SK-N-SH (cell line): ENCODE measurements at regions of chr11 and their contacts with region 1.

Region 1: DNA sequence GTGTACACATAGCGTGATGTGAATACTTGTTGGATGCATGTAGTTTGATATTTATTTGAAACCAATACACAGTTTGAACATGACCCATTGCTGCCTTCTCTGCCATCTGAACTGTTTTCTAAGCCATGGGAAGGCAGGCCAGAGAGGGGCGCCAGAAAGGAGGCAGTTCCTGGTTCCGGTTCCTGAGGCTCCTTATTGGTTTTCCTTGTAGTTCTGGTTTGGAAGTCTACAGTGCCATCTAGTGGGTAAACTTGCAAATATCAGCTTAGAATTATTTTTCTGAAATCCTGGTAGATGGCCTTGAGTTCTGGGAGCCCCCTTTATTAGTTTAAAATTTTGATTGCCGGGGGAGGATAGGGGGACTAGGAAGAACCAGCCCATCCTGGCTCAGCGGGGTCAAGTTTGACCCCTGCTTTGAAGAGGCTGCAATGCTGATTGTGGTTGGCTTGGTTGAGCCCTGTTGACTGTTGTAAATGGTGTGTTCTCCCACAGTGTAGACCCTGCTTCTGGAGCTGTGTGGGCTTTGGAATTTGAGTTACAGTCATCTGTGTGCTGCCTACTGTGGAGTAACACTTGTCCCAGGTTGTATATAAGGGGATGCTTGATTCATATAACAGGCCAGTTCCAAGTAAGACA is 48.4 kb downstream of the GRAMD1B start:
- DNase-seq: peak; percentile 76
- H3K4me3 ChIP-seq: no peak overlapping the region
- H3K27ac ChIP-seq: peak overlapping the region in 1 of 2 experiments; percentile 21; a peak in 1 of 4 replicates
- H3K4me1 ChIP-seq: peaks cover 10 to 28% of the 10 kb centered on the region in 2 experiments; a peak in 3 of 4 replicates
- H3K27me3 ChIP-seq: no peaks in the 10 kb centered on the region
- CTCF ChIP-seq: peak; percentile 79
- EP300 ChIP-seq: no peak
- RAD21 ChIP-seq: peak; percentile 93

Region 2: DNA sequence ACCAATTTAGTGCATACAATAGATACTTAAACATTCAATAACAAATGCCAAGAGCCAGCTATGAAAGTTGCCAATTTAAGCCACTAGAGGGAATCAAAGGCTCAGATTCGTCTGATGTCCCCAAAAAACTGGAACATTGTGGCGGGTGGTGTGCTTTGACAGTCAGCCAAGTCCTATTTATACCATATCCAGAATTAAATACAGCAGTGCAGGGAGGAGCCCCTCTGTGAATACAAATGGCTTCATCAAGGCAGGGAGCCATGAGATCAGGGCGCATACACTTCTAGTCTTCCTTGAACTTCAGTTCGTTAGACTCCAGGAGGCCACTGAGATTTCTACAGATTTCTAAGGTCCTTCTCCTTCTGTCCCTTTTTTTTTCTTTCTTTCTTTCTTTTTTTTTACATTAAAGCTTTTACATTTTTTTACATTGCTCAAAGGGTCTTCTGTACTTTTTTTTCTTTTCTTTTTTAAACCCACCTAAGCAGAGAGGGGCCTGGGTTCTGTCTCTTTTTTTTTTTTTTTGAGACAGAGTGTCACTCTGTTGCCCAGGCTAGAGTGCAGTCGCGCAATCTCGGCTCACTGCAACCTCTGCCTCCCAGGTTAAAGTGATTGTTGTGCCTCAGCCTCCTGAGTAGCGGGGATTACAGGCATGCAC is 375.0 kb before region 1 on chr11:
- CTCF ChIA-PET with region 1: interaction called, 22 read pairs
- POLR2A ChIA-PET with region 1: interaction called, 3 read pairs
- DNase-seq: peak; percentile 76
- H3K4me3 ChIP-seq: peak overlapping the region in 1 of 2 experiments; percentile 31; a peak in 1 of 4 replicates
- H3K27ac ChIP-seq: peak overlapping the region; percentile 31 to 53; a peak in 3 of 4 replicates
- H3K4me1 ChIP-seq: peaks cover 8 to 16% of the 10 kb centered on the region in 2 experiments; a peak in 2 of 4 replicates
- H3K27me3 ChIP-seq: no peaks in the 10 kb centered on the region
- CTCF ChIP-seq: peak; percentile 81
- EP300 ChIP-seq: no peak
- RAD21 ChIP-seq: peak; percentile 90

Region 3: DNA sequence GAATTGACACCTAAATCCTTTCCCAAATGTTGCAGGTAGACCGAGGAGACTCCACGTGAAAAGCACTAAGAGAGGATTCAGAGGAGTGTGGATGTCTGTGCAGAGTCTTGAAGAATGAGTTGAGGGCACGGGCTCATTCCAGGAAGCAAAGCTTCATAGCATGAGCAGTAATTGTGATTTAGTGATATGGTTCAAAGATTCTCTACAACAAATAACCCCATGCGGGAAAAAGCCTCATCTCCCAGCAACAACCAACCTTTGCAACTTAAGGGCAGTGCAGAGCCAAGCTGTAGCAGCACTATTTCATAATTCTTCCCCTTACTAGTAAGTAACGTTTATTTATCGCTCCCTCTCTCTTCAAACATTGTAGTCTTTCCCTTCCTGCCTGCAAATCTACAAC is 195.9 kb before region 1 on chr11:
- CTCF ChIA-PET with region 1: interaction called, 12 read pairs
- POLR2A ChIA-PET with region 1: no interaction called
- DNase-seq: no peak
- H3K4me3 ChIP-seq: no peak overlapping the region
- H3K27ac ChIP-seq: no peak overlapping the region
- H3K4me1 ChIP-seq: peaks cover 0 to 3% of the 10 kb centered on the region in 2 experiments; a peak in 1 of 4 replicates
- H3K27me3 ChIP-seq: no peaks in the 10 kb centered on the region
- CTCF ChIP-seq: no peak
- EP300 ChIP-seq: no peak
- RAD21 ChIP-seq: no peak

Region 4: DNA sequence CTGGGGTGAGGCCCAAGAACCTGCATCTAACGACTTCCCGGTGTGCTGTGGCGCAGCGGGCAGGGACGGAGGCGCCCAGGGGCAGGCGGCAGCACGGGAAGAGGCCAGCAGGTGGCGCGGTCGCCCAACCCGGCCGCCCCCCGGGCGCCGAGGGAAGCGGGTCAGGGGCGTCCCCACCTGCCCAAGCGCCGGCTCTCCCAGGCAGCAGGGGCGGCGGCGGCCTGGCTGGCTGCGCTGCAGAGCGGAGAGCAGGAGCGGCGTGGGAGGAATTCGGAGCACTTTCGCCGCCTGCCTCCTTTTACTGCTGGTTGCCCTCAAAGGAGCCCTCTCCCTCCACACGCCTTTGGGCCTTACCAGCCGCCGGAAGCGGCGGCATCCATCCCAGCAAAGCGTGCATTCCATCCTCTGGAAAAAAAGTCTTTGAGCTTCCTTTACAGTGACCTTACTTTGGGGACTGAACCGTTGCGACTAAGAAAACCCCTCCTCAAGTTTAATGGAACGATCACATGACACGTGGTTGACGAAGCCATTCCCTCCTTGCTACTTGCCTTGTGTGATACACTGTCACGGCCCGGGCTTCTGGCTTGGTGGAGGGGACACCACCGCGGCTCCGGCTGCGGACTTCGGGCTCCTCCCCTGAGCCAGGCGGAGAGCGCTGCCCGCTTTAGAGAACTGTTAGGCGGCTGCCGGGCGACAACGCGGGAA is 176.6 kb before region 1 on chr11:
- CTCF ChIA-PET with region 1: interaction called, 118 read pairs
- POLR2A ChIA-PET with region 1: no interaction called
- DNase-seq: peak; percentile 94
- H3K4me3 ChIP-seq: peak overlapping the region; percentile 3 to 29; a peak in 2 of 4 replicates
- H3K27ac ChIP-seq: 0 out of 4 replicates have a peak overlapping the region, but pooled peaks of 1 of the 2 experiments have one; percentile 5
- H3K4me1 ChIP-seq: peaks cover 17 to 19% of the 10 kb centered on the region in 2 experiments; a peak in 3 of 4 replicates
- H3K27me3 ChIP-seq: no peaks in the 10 kb centered on the region
- CTCF ChIP-seq: peak; percentile 78
- EP300 ChIP-seq: no peak
- RAD21 ChIP-seq: peak; percentile 83

Region 5: GRCh38 chr11:123308077-123308476 is 170.4 kb before region 1 on chr11:
- CTCF ChIA-PET with region 1: interaction called, 118 read pairs
- POLR2A ChIA-PET with region 1: no interaction called
- DNase-seq: peak; percentile 62
- H3K4me3 ChIP-seq: no peak overlapping the region
- H3K27ac ChIP-seq: peak overlapping the region; percentile 55 to 63
- H3K4me1 ChIP-seq: peaks cover 5 to 24% of the 10 kb centered on the region in 2 experiments; a peak in 3 of 4 replicates
- H3K27me3 ChIP-seq: no peaks in the 10 kb centered on the region
- CTCF ChIP-seq: no peak
- EP300 ChIP-seq: peak in 1 of 2 experiments; percentile 70; a peak in 2 of 4 replicates
- RAD21 ChIP-seq: 0 out of 2 replicates have a peak, but pooled peaks have one; percentile 4

Region 6: DNA sequence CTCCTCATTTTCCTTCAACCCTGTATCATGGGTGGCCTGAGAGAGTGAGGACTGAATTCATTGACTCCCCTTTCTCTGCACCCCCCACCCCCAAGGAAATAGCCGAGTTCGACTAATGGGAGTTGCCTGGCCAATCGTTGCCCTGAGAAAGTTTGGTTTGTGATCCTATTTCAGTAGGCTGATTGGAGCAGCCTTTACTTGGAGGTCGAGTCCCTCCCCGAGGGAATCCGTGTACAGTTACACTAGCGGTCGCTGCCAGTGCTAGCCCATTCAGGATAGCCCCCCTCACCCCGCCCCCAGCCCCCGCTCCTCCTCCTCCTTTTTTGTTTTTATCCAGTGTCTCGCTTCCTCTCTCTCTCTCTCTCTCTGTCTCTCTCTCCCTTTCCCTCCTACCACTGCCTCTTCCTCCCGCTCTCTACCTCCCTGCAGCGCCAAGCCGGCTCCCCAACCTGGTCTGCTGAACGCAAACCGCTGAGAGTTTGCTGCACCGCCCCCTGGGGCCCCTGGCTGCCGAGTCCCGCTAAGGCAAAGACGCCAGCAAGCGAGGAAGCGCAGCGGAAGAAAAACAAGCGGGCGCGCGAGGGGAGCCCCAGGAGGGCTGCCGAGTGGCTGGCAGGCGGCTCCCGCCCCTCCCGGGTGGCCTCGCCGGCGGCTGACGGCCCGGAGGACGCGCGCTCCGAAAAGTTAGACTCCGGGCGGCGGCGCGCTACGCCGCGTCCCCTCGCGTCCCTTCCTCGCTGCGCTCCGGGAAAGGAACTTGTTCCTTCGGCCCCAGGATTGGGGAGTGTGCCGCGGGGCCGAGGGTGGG is 48.4 kb before region 1 on chr11 and contains the start of gene GRAMD1B:
- CTCF ChIA-PET with region 1: interaction called, 11 read pairs
- POLR2A ChIA-PET with region 1: no interaction called
- DNase-seq: peak; percentile 87
- H3K4me3 ChIP-seq: peak within 1 kb of the TSS; percentile 61 to 73
- H3K27ac ChIP-seq: peak within 1 kb of the TSS in 1 of 2 experiments; percentile 87; a peak in 2 of 4 replicates
- H3K4me1 ChIP-seq: peaks cover 8 to 13% of the 10 kb centered on the region in 2 experiments; a peak in 3 of 4 replicates
- H3K27me3 ChIP-seq: no peaks in the 10 kb centered on the region
- CTCF ChIP-seq: peak; percentile 33
- EP300 ChIP-seq: no peak
- RAD21 ChIP-seq: no peak
- polyA plus RNA-seq, gene GRAMD1B: 14.0 and 14.5 TPM in 2 replicates

Region 7: DNA sequence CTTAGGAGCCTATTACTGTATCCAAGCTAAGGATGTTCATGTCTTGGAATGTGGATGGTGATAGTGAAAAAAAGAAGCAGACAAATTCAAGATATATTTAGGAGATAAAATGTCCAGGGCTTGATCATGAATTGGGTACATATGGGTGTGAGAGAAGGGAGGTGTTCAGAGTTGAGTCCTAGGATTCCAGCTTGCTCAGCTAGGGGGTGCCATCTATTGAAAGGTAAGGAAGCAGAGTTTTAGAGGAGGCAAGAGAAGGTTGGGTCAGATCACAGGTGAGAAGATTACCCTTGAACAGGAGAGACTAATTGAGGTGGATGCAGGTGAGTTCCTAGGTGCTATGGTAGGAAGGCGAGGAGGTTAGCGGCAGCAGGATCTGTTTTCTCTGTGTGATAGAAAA is 12.1 kb after region 1 on chr11:
- CTCF ChIA-PET with region 1: interaction called, 26 read pairs
- POLR2A ChIA-PET with region 1: no interaction called
- DNase-seq: no peak
- H3K4me3 ChIP-seq: no peak overlapping the region
- H3K27ac ChIP-seq: no peak overlapping the region
- H3K4me1 ChIP-seq: peaks cover 0 to 9% of the 10 kb centered on the region in 2 experiments; a peak in 1 of 4 replicates
- H3K27me3 ChIP-seq: no peaks in the 10 kb centered on the region
- CTCF ChIP-seq: no peak
- EP300 ChIP-seq: no peak
- RAD21 ChIP-seq: no peak

Region 8: DNA sequence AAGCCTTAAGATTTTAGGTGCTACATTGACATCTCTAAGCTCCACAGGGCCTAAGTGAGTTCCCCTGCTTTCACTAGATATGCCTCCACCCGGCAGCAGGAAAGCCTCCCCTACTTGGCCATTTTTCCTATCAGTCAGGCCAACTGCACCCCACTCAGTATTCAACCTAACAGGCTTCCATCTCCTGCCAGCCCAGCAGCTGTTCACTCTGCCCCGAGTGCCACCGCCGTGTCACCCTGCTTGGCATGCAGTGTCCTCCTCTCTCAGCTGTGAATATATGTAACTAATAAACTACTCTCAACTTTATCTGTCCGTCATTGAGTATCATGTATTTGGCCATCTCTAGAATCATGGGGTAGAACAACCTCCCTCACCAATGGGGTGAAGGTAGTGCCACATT is 336.7 kb after region 1 on chr11:
- CTCF ChIA-PET with region 1: no interaction called
- POLR2A ChIA-PET with region 1: no interaction called
- DNase-seq: no peak
- H3K4me3 ChIP-seq: no peak overlapping the region
- H3K27ac ChIP-seq: no peak overlapping the region
- H3K4me1 ChIP-seq: no peaks in the 10 kb centered on the region
- H3K27me3 ChIP-seq: peaks cover 3% of the 10 kb centered on the region; the same call in 1 of the 2 replicates
- CTCF ChIP-seq: no peak
- EP300 ChIP-seq: no peak
- RAD21 ChIP-seq: no peak